ENCODE measurements at regions of chr2 and their contacts with region 1.

Region 1: DNA sequence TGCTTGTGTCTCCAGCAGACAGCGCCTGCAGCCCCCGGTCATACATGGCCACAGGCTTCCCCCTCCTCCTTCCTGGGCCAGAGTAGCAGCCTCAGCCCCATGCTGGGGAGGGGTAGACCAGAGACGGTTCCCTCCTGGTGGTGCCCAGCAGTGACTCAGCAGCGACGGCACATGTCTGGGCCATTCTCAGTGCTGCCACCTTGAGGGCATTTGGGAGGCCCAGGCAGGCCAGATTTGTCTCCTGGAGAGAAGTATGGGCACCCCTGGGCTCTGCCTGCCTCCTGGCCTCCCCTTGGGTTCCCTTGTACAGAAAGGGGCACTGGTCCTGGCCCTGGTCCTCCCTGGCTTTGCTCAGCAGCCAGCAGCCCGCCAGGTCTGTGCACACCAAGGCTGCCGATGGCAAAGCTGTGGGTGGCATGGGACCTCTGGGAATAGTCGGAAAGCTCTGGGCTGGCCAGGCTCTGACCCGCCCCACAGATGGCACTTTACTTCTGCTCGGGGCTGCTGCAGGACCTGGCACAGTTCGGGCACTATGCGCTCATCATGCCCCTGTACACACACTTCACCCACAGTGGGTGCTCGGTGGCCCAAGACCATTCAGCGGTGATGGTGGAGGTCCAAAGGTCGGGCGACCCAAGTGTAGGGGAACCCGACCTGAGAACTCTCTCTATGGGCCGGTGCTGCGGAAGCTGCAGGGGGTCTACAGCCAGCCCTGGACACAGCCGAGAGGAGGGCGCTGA is 11.4 kb upstream of the ALPI start:
- DNase-seq: no peak
- H3K4me3 ChIP-seq: no peak overlapping the region
- CTCF ChIP-seq: peak; percentile 75

Region 2: DNA sequence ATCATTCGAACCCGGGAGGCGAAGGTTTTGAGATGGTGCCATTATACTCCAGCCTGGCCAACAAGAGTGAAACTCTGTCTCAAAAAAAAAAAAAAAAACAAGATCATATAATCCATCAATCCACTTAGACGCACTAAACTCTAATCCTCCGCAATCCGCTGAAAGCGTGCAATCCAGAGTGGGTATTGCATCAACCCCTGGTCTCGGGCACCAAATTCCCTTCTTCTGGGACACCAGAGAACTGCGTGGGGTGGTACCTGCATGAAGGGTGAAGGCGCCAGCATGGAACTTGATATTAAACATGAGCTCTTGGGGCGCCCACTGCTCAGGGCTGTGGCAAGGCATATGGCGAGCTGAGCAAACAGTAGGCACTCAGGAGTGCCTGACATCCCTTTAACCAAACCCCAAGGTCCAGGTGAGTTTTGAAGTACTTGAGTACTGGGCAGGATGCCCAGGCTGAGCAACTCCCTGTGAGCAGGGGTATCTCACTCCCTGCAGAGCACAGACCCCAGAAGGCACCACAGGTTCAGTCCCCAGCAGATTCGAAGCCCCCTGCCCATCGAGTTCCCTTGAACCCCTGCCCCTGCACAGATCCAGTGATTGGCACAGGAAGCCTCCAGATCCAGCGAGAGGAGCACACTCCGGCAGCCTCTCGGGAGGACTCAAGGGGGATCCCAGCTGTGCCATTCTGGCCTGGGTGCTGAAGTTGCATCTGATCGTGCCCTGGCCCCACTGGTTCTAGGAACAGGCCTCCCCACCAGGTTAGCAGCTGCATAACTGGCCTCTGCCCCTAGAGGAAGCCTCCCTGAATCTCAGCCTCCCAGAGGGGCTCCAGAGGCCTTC is 19.3 kb after region 1 on chr2:
- CTCF ChIA-PET with region 1: interaction called, 13 read pairs
- POLR2A ChIA-PET with region 1: no interaction called
- DNase-seq: no peak
- H3K4me3 ChIP-seq: no peak overlapping the region
- CTCF ChIP-seq: no peak

Measured in AG04449 (cell line).